ENCODE measurements at regions of chr3 and their contacts with region 1.

Region 1: DNA sequence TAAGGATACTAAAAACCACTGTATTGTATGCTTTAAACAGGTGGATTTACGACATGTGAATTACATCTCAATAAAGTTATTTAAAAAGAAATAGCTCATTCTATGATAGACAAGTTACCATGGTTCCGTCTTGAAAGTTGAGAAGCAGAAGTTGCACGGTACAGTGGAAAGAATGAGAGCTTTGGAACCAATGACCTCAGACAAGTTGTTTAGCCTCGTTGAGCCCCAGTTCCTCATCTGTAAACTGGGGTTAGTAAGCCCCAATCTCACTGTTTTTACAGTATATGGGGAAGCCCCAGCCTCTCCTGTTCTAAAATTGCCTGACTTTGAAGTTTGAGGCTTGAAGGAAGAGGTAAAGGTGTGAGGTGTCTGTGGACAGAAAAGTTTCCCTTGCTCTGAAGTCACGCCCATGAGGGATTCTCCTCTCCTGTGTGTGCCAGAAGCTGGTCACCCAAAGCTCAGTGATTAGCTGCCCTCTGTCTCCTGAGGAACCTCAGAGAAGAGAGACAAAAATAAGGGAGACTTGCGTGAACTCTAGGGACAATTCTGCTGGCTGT is 10.0 kb downstream of the CRYGS start:
- DNase-seq: peak; percentile 71
- ATAC-seq: peak; percentile 79
- H3K4me3 Mint-ChIP-seq: peak overlapping the region; percentile 55
- H3K27ac Mint-ChIP-seq: peak overlapping the region; percentile 99
- H3K4me1 Mint-ChIP-seq: peaks cover 94% of the 10 kb centered on the region
- H3K27me3 Mint-ChIP-seq: no peaks in the 10 kb centered on the region

Region 2: DNA sequence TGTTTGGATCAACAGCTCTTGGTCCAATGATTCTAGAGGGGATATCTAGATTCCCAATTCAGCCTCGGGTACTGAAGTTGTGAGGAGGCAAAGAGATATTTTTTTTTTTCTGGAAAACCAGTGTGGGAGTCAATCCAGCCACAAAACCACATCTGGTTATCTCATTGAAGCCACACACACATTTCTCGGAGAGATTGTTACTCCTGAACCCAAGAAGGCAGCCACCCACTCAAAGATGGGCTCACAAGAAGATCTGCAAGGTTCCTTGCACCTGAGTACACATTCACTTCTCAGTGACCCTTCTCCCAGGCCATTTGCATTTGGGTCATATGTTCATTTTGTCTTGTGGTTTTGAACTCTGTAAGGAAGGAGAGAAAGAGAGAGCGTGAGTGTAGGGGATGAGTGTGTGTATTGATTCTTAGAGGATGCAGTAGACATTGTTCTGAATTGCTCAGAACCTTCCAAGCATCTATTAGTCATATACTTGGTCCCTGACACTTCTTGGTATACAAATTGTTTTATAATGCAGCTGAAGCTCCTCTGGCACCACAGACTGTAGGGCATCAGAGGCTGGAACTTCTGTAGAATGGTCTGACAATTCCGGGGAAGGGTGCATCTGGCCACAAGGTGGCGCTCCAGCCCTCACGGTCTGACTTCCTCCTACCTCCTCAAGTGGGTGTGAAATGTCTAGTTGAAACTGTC is 557.1 kb before region 1 on chr3:
- CTCF ChIA-PET with region 1: interaction called, 38 read pairs
- POLR2A ChIA-PET with region 1: no interaction called
- intact Hi-C with region 1: loop called in 1 of 2 experiments (anchors 1 kb)
- DNase-seq: peak; percentile 93
- ATAC-seq: peak; percentile 91
- H3K4me3 Mint-ChIP-seq: no peak overlapping the region
- H3K27ac Mint-ChIP-seq: peak overlapping the region; percentile 11
- H3K4me1 Mint-ChIP-seq: peaks cover 18% of the 10 kb centered on the region
- H3K27me3 Mint-ChIP-seq: no peaks in the 10 kb centered on the region

Region 3: GRCh38 chr3:186152889-186153292 is 381.3 kb before region 1 on chr3:
- CTCF ChIA-PET with region 1: no interaction called
- POLR2A ChIA-PET with region 1: no interaction called
- intact Hi-C with region 1: loop called in 1 of 2 experiments (anchors 5 kb)
- DNase-seq: no peak
- ATAC-seq: peak; percentile 18
- H3K4me3 Mint-ChIP-seq: no peak overlapping the region
- H3K27ac Mint-ChIP-seq: no peak overlapping the region
- H3K4me1 Mint-ChIP-seq: peaks cover 13% of the 10 kb centered on the region
- H3K27me3 Mint-ChIP-seq: peaks cover 36% of the 10 kb centered on the region

Region 4: DNA sequence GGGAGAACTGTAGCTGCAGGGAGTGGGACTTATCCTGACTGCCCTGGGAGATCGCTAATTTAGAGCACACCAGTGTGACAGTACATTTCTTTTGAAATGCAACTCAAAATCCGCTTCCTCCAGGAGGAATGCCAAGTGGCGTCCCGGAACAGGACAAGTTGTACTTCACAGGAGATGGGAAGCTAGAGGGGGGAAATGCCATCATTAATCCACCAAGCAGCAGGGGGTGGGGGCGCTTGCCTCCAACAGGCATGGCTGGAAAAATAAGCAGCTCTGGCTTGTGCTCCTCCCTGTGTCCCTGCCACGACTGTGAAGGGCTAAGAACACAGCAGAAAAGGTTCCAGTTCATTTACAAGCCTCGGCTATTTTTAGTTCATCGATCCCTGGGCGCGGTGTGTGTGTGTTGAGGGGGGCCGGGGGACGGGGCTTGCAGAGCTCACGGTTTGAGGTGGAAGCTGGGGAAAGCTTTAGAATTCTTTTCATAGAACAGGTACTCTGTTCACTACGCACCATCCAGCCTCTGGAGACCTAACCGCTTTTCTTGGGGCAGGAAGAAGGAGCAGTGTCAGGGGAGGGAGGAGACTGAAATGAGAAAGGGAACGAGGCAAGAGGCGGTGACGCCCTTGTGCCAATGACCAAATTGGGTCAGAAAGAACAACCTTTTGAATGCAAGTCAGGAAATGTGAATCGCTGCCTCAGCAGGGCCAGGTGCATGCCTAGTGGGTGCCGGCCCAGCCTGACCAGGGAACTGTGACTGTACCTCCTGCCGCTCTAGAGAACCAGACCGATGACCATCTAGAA is 120.4 kb before region 1 on chr3:
- CTCF ChIA-PET with region 1: interaction called, 3 read pairs
- POLR2A ChIA-PET with region 1: interaction called, 6 read pairs
- intact Hi-C with region 1: loop called (anchors 1 to 5 kb)
- DNase-seq: peak; percentile 56
- ATAC-seq: peak; percentile 13
- H3K4me3 Mint-ChIP-seq: peak overlapping the region; percentile 51
- H3K27ac Mint-ChIP-seq: peak overlapping the region; percentile 17
- H3K4me1 Mint-ChIP-seq: peaks cover 54% of the 10 kb centered on the region
- H3K27me3 Mint-ChIP-seq: peaks cover 5% of the 10 kb centered on the region

Region 5: GRCh38 chr3:186506857-186507256 is 27.3 kb before region 1 on chr3:
- CTCF ChIA-PET with region 1: interaction called, 11 read pairs
- POLR2A ChIA-PET with region 1: interaction called, 14 read pairs
- intact Hi-C with region 1: no loop called
- DNase-seq: peak; percentile 76
- ATAC-seq: peak; percentile 76
- H3K4me3 Mint-ChIP-seq: no peak overlapping the region
- H3K27ac Mint-ChIP-seq: peak overlapping the region; percentile 38
- H3K4me1 Mint-ChIP-seq: peaks cover 45% of the 10 kb centered on the region
- H3K27me3 Mint-ChIP-seq: no peaks in the 10 kb centered on the region

Region 6: GRCh38 chr3:186520957-186521842 is 13.0 kb before region 1 on chr3:
- CTCF ChIA-PET with region 1: interaction called, 59 read pairs
- POLR2A ChIA-PET with region 1: interaction called, 27 read pairs
- intact Hi-C with region 1: loop called (anchors 1 kb)
- DNase-seq: peak; percentile 85
- ATAC-seq: peak; percentile 68
- H3K4me3 Mint-ChIP-seq: peak overlapping the region; percentile 55
- H3K27ac Mint-ChIP-seq: peak overlapping the region; percentile 71
- H3K4me1 Mint-ChIP-seq: peaks cover 60% of the 10 kb centered on the region
- H3K27me3 Mint-ChIP-seq: no peaks in the 10 kb centered on the region

Region 7: DNA sequence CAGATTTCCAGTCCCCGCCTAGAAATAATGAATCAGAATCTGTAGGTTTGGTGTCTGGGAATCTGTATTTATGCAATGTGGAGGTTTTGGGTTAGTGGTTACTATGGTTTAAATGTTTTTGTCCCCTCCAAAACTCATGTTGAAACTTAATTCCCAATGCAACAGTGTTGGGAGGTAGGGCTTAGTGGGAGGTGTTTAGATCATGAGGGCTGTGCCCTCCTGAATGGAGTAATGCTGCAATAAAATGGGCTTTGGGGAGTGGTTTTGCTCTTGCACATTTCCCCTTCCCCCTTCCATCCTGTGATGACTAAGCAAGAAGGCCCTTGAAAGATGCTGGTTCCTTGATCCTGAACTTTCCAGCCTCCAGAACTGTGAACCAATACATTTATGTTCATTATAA is 281.2 kb after region 1 on chr3:
- CTCF ChIA-PET with region 1: no interaction called
- POLR2A ChIA-PET with region 1: no interaction called
- intact Hi-C with region 1: no loop called
- DNase-seq: no peak
- ATAC-seq: no peak
- H3K4me3 Mint-ChIP-seq: no peak overlapping the region
- H3K27ac Mint-ChIP-seq: no peak overlapping the region
- H3K4me1 Mint-ChIP-seq: no peaks in the 10 kb centered on the region
- H3K27me3 Mint-ChIP-seq: no peaks in the 10 kb centered on the region